HEK293 (cell line): ENCODE measurements at regions of chr19 and their contacts with region 1.

Region 1: DNA sequence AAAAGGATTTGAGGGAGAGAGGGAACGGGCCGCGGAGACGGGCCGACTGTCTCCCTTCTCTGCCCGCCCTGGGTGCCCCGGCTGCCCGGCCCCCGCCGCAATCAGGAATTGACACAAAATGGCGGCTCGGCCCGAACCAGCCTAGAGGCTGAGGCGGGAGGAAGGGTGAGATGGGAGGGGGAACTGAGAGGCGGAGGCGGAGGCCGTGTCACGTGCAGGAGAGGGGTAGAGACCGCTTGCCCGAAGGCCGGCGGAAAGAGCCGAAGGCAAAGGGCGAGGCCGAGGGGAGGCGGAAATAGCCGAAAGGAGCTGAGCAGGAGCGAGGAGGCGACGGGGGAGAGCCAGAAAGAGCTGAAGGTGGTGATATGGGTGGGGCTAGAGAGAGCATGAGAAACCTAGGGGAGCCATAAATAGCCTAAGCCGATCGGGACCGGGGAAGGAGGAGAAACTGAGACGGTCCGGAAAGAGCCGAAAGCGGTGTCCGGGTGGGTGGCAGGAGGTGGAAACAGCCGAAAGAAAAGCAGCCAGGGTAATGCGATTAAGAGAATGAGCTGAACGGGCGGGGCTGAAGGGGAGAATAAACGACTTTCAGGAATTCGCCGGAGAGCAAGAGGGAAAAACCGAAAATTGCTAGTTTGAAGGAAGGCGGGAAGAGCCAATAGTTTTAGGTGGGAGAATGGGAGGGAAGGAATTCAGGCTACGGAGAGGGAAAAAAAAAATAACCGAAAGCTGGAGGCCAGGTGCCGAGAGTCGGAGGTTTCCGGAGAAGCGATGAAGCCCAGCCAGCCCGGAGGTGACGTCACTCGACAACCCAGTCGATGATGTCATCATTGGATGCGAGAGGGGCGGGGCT is at the start of gene ZC3H4:
- H3K4me3 ChIP-seq: peak within 1 kb of the TSS; percentile 76
- H3K27ac ChIP-seq: peak within 1 kb of the TSS; percentile 100
- H3K4me1 ChIP-seq: peaks cover 29% of the 10 kb centered on the region
- CTCF ChIP-seq: no peak

Region 2: GRCh38 chr19:47035127-47036096 is 77.8 kb before region 1 on chr19:
- CTCF ChIA-PET with region 1: interaction called, 4 read pairs
- POLR2A ChIA-PET with region 1: interaction called, 10 read pairs
- H3K4me3 ChIP-seq: peak overlapping the region; percentile 40
- H3K27ac ChIP-seq: peak overlapping the region; percentile 80
- H3K4me1 ChIP-seq: peaks cover 17% of the 10 kb centered on the region
- CTCF ChIP-seq: peak; percentile 97

Region 3: GRCh38 chr19:47075179-47075810 is 37.9 kb before region 1 on chr19:
- CTCF ChIA-PET with region 1: interaction called, 11 read pairs
- POLR2A ChIA-PET with region 1: interaction called, 36 read pairs
- H3K4me3 ChIP-seq: no peak overlapping the region
- H3K27ac ChIP-seq: no peak overlapping the region
- H3K4me1 ChIP-seq: no peaks in the 10 kb centered on the region
- CTCF ChIP-seq: no peak

Region 4: DNA sequence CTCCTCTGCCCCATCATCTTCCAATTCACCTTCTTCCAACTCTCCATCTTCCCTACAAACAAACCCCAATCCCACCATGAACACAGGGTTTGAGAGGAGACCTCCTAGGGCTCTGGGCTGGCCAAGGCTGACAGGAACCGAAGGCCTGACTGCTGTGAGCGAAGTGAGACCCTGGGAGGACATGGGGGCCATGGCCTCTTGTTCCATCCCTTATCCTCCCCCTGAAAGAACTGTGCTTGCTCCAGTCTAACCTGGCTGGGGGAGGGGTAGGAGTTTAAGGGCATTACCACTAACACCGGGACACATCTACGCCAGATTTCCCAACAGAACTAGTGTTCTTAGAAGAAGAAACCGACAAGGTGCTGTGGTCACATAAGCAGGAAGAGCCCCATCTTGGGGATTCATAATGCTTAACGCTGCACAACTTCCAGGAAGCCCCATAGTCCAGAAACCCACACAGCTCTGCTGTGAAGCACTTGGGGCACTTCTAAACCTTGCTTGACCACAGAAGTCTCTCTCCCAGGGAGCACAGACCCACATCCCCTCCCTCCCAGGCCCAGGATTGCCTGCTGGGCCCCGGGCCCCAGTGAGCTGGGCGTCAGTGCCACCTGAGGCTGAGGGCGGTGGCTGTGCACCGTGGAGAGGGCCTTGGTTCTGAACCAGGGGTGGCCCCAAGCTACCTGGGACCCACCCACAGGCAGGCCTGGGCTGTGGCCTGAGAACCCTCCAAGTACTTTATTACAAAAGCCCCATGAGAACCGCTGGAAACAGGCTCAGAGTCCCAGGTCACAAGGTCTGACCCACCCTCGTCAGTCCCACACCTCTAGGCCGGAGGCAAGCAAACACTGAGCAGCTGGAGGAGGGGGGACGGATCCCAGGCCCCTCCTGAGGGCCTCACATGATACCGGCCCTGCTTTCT is 18.4 kb before region 1 on chr19:
- CTCF ChIA-PET with region 1: interaction called, 8 read pairs
- POLR2A ChIA-PET with region 1: interaction called, 11 read pairs
- H3K4me3 ChIP-seq: no peak overlapping the region
- H3K27ac ChIP-seq: peak overlapping the region; percentile 0; the same call in 1 of the 2 replicates
- H3K4me1 ChIP-seq: no peaks in the 10 kb centered on the region
- CTCF ChIP-seq: no peak

Region 5: DNA sequence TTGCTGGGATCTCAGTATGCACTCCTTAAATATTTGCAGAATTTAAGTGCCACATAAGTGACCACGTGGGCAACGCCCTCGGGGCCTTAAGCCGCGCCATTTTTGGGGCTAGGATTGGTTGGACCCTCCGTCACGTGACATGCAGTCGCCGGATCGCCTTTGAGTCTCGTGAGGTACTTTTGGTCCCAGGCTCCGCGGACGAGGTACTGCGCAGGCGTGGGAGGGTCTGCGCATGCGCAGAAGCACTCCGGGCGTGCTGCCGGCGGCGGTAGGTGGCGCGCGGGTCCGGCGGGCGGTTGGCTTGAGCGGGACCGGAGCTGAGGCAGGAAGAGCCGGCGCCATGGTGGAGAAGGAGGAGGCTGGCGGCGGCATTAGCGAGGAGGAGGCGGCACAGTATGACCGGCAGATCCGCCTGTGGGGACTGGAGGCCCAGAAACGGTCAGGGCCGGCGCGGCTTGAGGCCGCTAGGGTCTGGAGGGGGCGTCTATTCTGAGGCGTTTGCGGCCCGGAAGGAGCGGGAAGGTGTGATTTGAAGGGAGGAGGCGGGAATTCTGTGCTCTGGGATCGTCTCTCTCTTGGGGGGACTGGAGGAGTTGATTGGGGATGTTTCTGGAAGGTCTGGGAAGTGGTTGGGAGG is 17.5 kb after region 1 on chr19 and contains the start of gene SAE1:
- CTCF ChIA-PET with region 1: interaction called, 18 read pairs
- POLR2A ChIA-PET with region 1: interaction called, 86 read pairs
- H3K4me3 ChIP-seq: peak within 1 kb of the TSS; percentile 75
- H3K27ac ChIP-seq: peak within 1 kb of the TSS; percentile 92
- H3K4me1 ChIP-seq: peaks cover 22% of the 10 kb centered on the region
- CTCF ChIP-seq: peak; percentile 97

Region 6: GRCh38 chr19:47256688-47257443 is 143.6 kb after region 1 on chr19:
- CTCF ChIA-PET with region 1: no interaction called
- POLR2A ChIA-PET with region 1: interaction called, 29 read pairs
- H3K4me3 ChIP-seq: peak overlapping the region; percentile 70
- H3K27ac ChIP-seq: peak overlapping the region; percentile 67
- H3K4me1 ChIP-seq: peaks cover 19% of the 10 kb centered on the region
- CTCF ChIP-seq: no peak

Region 7: DNA sequence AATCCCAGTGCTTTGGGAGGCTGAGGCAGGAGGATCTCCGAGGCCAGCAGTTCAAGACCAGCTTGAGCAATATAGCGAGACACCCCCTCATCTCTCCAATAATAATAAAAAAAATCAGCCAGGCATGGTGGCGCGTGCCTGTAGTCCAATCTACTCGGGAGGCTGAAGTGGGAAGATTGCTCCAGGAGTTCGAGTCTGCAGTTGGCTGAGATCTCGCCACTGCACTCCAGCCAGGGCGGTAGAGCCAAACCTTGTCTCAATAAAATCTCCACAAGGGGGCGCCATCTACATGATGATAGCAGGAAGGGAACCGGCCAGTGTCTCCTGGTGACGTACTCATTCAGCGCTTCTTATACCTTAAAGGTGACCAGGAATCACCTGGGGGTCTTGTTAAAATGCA is 182.8 kb after region 1 on chr19:
- CTCF ChIA-PET with region 1: no interaction called
- POLR2A ChIA-PET with region 1: no interaction called
- H3K4me3 ChIP-seq: no peak overlapping the region
- H3K27ac ChIP-seq: no peak overlapping the region
- H3K4me1 ChIP-seq: no peaks in the 10 kb centered on the region
- CTCF ChIP-seq: peak; percentile 70